Tibial artery (tissue), 4 donors: ENCODE measurements at regions of chr1 and their contacts with region 1.

Region 1: DNA sequence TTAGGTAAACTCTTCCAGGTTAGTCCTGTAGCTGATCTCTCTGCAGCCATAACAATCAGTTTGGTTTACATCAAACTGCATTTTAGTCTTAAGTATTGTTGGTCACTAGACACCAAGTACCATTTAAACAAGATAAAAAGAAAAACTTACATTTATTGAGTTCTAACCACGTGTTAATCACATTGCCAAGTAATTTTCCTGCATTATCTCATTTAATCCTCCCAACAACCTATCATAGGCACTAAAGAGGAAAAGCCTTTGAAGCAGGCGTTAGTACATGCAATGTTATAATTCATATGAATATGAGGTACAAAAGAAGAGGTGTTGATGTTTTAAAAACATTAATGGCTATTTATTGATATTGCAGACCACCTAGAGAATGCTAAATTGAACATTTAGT is 9.0 kb downstream of the DR1 start:
- DNase-seq: no peak
- H3K4me3 ChIP-seq: no peak overlapping the region
- H3K27ac ChIP-seq: no peak overlapping the region
- H3K4me1 ChIP-seq: peaks cover 0 to 74% (median 23%) of the 10 kb centered on the region in 4 donors
- H3K27me3 ChIP-seq: no peaks in the 10 kb centered on the region
- CTCF ChIP-seq: no peak

Region 2: GRCh38 chr1:93374334-93375106 is 19.8 kb after region 1 on chr1:
- intact Hi-C with region 1: loop called (anchors 1 kb)
- DNase-seq: no peak
- H3K4me3 ChIP-seq: no peak overlapping the region
- H3K27ac ChIP-seq: no peak overlapping the region
- H3K4me1 ChIP-seq: no peaks in the 10 kb centered on the region
- H3K27me3 ChIP-seq: no peaks in the 10 kb centered on the region
- CTCF ChIP-seq: no peak

Region 3: DNA sequence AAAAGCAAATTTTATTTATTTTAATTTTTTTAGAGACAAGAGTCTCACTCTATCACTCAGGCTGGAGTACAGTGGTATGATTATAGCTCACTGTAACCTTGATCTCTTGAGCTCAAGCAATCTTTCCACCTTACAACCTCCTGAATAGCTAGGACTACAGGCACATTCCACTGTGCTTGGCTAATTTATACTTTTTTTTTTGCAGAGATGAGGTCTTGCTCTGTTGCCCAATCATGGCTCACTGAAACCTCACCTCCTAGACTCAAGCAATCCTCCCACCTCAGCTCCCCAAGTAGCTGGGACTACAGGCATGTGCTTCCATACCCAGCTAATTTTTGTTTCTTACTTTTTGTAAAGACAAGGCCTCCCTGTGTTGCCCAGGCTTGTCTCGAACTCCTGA is 40.4 kb after region 1 on chr1:
- intact Hi-C with region 1: no loop called
- DNase-seq: no peak
- H3K4me3 ChIP-seq: no peak overlapping the region
- H3K27ac ChIP-seq: no peak overlapping the region
- H3K4me1 ChIP-seq: no peaks in the 10 kb centered on the region
- H3K27me3 ChIP-seq: no peaks in the 10 kb centered on the region
- CTCF ChIP-seq: no peak